ENCODE measurements at regions of chr2 and their contacts with region 1.

Region 1: DNA sequence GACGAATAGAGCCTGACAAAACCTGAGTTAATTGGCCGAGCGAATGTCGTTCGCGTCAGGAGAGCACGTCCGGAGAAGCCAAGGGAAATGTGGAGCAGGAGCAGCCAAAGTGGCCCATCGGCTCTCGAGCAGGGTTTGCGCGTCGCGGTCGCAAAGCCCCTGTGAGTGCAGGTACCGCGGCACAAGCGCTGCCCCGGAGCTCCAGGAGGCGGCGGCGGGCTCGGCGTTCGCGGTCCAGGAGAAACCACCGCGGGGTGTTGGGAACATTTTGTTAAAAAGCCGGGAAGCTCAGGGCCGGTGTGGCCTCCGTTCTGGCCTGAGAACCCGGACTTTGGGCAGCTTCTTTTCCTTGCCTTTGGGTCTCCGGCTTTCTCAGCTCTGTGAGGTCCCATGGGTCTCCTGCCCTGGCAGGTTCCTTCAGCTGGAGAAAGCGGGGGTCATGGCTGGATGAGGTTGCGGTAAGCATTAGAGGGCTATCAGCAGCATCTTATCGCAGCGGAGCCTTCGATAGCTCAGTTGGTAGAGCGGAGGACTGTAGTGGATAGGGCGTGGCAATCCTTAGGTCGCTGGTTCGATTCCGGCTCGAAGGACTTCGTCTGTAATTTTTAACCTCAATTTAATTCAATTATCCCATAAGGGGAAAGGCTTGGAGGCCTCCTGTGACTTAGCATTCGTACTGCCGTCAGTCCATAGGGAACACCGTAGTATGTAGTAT is 1.0 kb upstream of the AGBL5 start:
- DNase-seq: peak; percentile 92
- H3K4me3 Mint-ChIP-seq: peak overlapping the region; percentile 88
- H3K27ac Mint-ChIP-seq: peak overlapping the region; percentile 98
- H3K4me1 Mint-ChIP-seq: peaks cover 14% of the 10 kb centered on the region
- H3K27me3 Mint-ChIP-seq: peaks cover 2% of the 10 kb centered on the region

Region 2: GRCh38 chr2:27032495-27033252 is 17.8 kb before region 1 on chr2 and contains the start of gene TMEM214:
- intact Hi-C with region 1: loop called (anchors 1 kb)
- DNase-seq: peak; percentile 78
- H3K4me3 Mint-ChIP-seq: peak within 1 kb of the TSS; percentile 95
- H3K27ac Mint-ChIP-seq: peak within 1 kb of the TSS; percentile 87
- H3K4me1 Mint-ChIP-seq: peaks cover 31% of the 10 kb centered on the region
- H3K27me3 Mint-ChIP-seq: no peaks in the 10 kb centered on the region
- total RNA-seq, gene TMEM214: 96.3 and 102 TPM in 2 replicates

Region 3: DNA sequence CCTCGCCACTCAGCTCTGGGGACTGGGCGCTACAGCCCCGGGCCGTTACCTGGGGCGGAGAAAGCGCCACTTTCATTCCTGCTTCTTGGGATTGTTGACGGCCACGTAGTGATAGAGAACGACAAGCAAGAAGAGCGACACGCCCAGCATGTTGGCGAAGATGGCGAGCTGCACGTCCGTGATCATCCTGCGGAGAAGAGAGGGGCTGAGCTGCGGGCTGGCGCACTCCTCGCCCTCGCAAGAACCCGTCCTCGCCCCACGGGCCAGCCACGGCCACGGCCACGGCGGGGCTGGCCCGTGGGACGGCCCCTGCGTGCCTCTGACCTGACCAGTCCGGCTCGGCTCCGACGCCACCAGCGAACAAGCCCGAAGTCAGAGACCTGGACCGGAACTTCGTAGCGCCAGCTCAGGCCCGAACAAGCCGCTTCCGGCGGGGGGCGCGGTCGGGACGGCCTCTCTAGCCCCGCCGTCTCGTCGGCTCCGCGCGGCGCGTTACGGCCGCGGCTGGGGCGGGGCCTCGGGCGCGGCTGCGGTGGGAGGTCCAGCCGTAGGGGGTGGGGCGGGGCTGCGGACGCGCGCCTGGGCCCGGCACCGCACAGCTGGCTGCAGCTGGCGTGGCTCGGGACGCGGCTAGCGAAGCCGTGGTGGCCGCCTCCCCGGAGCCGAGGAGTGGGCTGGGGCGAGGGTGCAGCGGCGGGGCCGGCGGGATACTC is 21.0 kb after region 1 on chr2 and contains the start of gene OST4:
- intact Hi-C with region 1: loop called (anchors 1 kb)
- DNase-seq: peak; percentile 89
- H3K4me3 Mint-ChIP-seq: peak within 1 kb of the TSS; percentile 98
- H3K27ac Mint-ChIP-seq: peak within 1 kb of the TSS; percentile 90
- H3K4me1 Mint-ChIP-seq: peaks cover 49% of the 10 kb centered on the region
- H3K27me3 Mint-ChIP-seq: no peaks in the 10 kb centered on the region
- total RNA-seq, gene OST4: 330 and 341 TPM in 2 replicates

Region 4: GRCh38 chr2:27211829-27212627 is 161.6 kb after region 1 on chr2 and contains the starts of genes ATRAID and SLC5A6:
- intact Hi-C with region 1: loop called (anchors 2 kb)
- DNase-seq: peak; percentile 88
- H3K4me3 Mint-ChIP-seq: peak within 1 kb of the TSS; percentile 98
- H3K27ac Mint-ChIP-seq: peak within 1 kb of the TSS; percentile 99
- H3K4me1 Mint-ChIP-seq: peaks cover 31% of the 10 kb centered on the region
- H3K27me3 Mint-ChIP-seq: no peaks in the 10 kb centered on the region
- total RNA-seq, gene ATRAID: 107 and 114 TPM in 2 replicates
- total RNA-seq, gene SLC5A6: 70.7 and 73.9 TPM in 2 replicates